ENCODE measurements at regions of chr5 and their contacts with region 1.

Region 1: DNA sequence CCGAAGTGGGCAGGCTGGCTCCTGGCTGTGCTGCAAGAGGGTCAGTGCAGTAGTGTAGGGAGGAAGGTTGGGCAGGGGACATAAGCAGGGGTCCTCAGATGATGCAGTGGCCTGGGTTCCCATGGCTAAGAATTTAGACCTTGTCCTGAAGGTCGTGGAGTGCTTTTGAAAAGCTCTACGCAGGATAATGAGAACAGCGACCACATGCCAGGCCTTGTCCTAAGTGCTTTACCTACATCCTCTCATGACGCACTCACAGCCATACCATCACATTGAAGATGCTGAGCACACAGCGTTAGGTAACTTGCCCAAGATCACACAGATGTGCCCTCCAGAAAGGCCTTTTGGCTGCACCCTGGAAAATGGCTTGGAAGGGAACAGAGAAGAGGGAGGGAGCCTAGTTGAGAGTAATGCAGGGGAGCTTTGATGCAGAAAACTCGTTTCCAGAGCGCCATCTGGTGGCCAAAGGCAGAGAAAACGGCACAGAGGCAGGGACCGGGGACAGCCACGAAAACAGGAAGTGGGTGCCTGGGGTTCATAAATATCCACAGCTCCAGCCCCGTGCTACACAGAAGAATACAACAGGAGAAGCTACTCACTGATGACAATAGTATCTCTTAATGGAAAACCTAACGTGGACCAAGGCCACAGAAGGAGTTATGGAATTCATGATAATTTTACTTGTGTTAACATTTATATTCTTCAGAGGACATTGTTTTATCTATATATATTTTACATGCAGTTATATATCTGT is 2.6 kb upstream of the PCDH12 start:
- DNase-seq: peak; percentile 87
- CTCF ChIP-seq: peak; percentile 87

Region 2: GRCh38 chr5:141664732-141665461 is 295.7 kb before region 1 on chr5:
- CTCF ChIA-PET with region 1: interaction called, 23 read pairs
- POLR2A ChIA-PET with region 1: no interaction called
- DNase-seq: peak; percentile 88
- CTCF ChIP-seq: peak; percentile 86

Region 3: GRCh38 chr5:141889282-141889871 is 71.2 kb before region 1 on chr5:
- CTCF ChIA-PET with region 1: interaction called, 19 read pairs
- POLR2A ChIA-PET with region 1: no interaction called
- DNase-seq: no peak
- CTCF ChIP-seq: peak; percentile 53

Region 4: DNA sequence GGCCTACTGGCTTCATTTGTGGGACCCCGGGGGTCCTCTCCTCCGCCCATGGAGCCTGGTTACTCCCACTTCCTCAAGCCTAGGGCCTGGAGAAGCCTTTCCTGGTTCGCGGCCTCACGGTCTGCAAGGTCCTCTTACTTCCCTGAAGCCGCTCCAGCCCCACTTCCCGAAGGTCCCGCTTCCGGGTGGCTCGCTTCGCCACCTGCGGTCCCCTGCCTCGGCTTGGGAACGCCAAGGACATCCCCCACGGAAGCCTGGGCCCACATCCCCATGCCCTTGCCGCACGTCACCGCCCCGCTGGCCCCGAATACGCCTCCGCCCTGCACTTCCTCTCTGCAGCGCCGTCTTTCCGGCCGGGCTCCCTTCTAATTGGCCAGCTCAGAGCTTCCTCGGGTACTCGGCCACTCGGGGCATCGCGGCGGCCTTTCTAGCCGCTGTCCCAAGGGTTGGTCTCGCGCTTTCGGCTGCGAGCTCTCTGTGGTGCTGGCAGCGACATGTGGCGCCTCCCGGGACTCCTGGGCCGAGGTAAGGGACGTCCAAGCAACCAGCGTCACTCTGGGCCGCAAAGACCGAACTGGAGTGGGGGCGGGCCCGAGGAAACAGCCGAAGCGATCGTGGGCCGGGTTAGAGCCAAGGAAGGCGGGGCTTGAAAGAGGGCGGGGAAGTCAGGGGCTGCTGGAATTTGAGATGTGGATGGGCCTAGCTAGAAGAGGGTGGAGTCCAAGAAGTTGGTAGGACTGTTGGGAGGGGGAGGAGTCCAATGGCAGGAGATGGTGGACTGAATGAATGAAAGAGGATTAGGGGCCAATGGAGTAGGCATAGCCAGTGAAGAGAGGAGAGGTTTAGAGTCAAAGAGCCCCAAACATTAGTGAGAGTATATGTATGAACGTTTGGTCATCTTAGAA is 36.9 kb before region 1 on chr5 and contains the start of gene DELE1:
- CTCF ChIA-PET with region 1: interaction called, 30 read pairs
- POLR2A ChIA-PET with region 1: interaction called, 4 read pairs
- DNase-seq: peak; percentile 95
- CTCF ChIP-seq: no peak

Region 5: GRCh38 chr5:141940695-141941271 is 19.8 kb before region 1 on chr5:
- CTCF ChIA-PET with region 1: interaction called, 68 read pairs
- POLR2A ChIA-PET with region 1: no interaction called
- DNase-seq: no peak
- CTCF ChIP-seq: no peak

Region 6: DNA sequence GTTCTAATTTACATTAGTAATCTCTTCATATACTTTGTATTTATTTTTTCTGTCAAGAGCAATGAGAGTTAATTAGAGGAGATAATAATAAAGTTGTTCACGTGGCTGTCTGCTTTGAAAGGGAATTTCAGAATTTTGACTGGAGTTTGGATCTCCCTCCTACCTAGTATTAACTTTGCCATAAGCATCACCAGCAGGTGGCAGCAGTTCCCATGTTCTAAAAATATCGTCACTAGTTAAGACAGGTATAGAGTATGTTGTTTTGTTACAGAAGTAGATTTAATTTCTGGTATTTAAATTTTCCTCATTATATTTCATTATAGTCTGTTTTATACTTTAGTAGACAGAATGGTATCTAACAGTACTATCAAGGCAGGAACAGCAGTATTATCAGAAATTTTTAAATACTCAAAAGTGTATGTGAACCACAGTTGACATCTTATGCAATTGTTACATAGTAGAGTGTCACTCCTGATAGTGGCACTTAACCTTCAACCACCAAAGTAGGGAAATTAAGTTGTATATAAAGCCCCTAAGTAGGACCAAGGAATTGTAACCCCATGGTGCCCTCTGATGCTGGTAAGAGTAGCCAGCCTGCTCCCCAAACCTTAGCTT is 31.8 kb after region 1 on chr5:
- CTCF ChIA-PET with region 1: interaction called, 32 read pairs
- POLR2A ChIA-PET with region 1: no interaction called
- DNase-seq: peak; percentile 54
- CTCF ChIP-seq: peak; percentile 70

Region 7: GRCh38 chr5:142263346-142263745 is 302.7 kb after region 1 on chr5:
- CTCF ChIA-PET with region 1: no interaction called
- POLR2A ChIA-PET with region 1: no interaction called
- DNase-seq: no peak
- CTCF ChIP-seq: no peak

Measured in GM10248 (cell line).